Left ventricle myocardium inferior (tissue), 1 donor: ENCODE measurements at regions of chr1 and their contacts with region 1.

Region 1: DNA sequence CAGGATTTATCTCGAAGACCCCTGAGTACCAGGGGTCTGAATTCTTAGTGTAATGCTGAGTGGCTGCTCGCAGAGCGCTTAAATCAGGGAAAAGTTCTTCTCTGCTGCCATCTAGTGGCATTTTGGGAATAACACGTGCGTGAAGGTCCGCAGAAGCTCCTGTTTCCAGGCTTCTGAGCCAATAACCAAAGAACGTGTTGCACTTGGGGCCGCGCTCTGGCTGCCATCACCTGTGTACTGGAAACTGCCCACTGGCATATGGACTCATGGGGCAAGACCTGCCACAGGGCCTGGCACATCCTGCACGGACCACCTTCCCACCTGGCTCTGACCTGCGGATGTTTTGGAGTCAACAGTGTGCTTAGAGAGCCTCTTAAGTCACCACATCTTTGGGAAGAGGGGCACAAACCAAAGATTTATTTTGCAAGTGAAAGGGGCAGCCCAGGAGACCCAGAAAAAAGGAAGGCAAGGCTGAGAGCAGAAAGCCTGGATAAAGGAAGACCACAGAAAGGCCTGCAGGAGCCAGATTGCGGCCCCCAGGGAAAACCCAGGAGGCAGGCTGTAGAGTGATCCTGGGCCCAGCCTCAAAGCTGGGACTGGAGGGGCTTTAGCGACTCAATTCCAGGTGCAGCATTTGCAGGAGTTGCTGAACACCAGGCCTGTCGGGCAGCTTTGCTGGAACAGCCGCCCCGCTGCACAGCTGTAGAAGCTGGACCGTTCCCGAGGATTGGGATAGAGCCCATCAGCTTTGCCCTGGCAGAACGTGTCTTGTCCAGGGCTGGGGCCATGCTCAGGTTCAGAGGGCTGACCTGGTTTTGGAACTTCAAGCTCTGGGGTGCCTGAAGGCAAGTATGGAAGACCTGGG is 13.0 kb downstream of the CHIT1 start:
- DNase-seq: no peak
- H3K4me3 ChIP-seq: no peak overlapping the region
- H3K27ac ChIP-seq: no peak overlapping the region
- H3K4me1 ChIP-seq: peaks cover 5% of the 10 kb centered on the region
- H3K27me3 ChIP-seq: peaks cover 36% of the 10 kb centered on the region
- CTCF ChIP-seq: peak; percentile 87

Region 2: DNA sequence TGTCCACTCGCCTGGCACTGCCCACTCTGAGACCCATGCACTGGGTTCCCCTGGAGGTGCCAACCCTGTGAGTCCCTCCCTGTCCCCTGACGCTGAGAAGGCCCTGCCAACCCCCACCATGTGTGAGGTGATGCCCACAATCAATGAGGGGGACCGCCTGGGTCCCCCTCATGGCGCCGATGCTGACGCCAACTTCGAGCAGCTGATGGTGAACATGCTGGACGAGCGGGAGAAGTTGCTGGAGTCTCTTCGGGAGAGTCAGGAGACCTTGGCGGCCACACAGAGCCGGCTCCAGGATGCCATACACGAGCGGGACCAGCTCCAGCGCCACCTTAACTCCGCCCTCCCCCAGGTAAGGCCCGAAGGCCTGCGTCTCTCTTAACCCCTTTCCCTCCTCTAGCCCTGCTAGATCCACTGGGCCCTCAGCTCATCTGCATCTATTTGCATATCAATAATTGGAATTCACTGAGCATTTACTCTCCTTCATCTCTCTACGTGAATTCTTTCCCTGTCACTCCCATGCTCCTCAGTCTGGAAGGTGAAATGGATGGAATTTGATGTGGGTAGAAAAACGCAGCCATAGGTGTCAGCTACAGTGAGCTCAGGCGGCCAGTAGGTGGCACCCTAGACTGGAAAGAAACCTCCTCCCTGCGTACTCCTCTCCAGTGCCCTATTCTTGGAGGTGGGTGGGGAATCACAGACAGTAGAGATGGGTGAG is 177.5 kb before region 1 on chr1:
- intact Hi-C with region 1: loop called (anchors 2 kb)
- DNase-seq: peak; percentile 72
- H3K4me3 ChIP-seq: peak overlapping the region; percentile 38
- H3K27ac ChIP-seq: peak overlapping the region; percentile 87
- H3K4me1 ChIP-seq: peaks cover 71% of the 10 kb centered on the region
- H3K27me3 ChIP-seq: no peaks in the 10 kb centered on the region
- CTCF ChIP-seq: peak; percentile 93

Region 3: DNA sequence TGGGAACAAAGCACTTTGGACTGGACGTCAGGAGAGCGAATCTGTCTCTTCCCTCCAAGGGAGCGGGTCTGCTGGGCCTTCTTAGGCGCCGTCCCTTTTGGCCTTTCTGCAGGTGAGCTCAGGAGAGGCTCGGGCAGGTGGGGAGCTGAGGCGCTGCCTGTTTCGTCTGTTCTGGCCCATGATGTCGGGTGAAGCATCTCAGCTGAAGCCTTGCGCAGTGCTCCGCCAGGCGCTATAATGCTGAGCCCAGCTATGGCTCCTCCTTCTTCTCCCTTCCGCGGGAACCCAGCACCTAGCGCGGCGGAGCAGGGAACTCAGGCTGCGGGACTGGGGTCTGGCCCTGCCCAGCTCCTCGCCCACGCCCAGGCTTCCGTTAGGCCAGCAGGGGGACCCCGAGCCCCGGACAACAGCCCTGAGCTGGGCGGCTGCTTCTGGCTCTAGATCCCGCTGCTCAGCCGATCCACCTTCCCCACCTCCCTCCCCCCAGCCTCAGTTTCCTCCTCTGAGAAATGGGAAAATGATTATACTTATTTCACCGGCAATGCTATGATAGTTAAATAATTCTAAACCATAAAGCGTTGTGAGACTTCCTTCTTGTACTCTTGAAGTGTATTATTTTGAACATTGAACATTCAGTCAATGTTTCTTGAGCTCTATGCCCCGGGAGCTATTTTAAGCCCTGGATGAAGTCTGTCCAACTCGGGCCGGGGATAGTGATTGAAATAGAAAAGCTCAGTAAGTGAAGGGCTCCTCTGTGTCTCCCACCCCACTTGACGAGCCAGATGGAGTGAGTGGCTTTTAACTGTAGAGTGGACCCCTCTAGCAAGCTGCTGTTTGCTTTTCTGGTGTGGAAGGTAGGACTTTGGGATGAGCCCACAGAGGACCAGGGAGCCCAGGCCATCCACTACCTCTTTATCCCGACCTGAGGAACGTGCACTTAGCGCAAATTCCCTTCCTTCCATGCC is 98.6 kb before region 1 on chr1:
- intact Hi-C with region 1: loop called (anchors 2 kb)
- DNase-seq: peak; percentile 74
- H3K4me3 ChIP-seq: no peak overlapping the region
- H3K27ac ChIP-seq: no peak overlapping the region
- H3K4me1 ChIP-seq: peaks cover 9% of the 10 kb centered on the region
- H3K27me3 ChIP-seq: peaks cover 69% of the 10 kb centered on the region
- CTCF ChIP-seq: peak; percentile 86

Region 4: DNA sequence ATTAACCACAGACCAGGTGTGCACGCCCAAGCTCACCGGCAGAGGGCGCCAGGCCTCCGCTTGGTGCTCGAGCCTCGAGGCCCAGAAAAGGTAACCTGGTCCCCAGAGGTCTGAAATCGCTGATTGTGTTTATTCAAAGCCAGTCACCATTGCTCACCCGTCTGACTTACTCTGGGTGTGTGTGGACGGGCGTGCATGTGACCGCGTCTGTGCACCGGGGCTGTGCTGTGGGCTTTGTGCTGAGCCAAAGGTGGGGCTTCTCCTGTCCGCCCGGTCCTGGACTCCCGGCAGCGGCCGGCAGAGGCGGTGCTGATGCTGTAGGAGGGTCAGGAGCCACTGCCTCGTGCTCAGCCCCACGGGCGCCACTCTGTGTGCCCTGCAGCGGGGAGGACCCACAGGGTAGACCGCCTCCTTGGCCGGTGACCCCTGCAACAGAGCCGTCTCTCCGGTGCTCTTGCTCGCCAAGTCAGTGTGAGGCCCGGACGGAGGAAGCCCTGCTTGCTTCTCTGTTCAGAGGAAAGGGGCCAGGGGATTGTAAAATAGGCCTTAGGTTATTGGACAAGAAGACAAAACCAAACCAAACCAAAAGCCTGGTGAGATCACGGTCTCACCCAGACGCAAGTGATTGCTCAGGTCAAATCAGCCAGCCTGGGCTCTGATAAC is 56.8 kb after region 1 on chr1:
- intact Hi-C with region 1: no loop called
- DNase-seq: peak; percentile 85
- H3K4me3 ChIP-seq: peak overlapping the region; percentile 58
- H3K27ac ChIP-seq: peak overlapping the region; percentile 96
- H3K4me1 ChIP-seq: peaks cover 80% of the 10 kb centered on the region
- H3K27me3 ChIP-seq: no peaks in the 10 kb centered on the region
- CTCF ChIP-seq: peak; percentile 99